ENCODE measurements at regions of chr6 and their contacts with region 1.

Region 1: GRCh38 chr6:14066782-14067406 is 50.7 kb upstream of the CD83 start:
- DNase-seq: no peak
- ATAC-seq: peak; percentile 77
- H3K4me3 Mint-ChIP-seq: no peak overlapping the region
- H3K27ac Mint-ChIP-seq: no peak overlapping the region
- H3K4me1 Mint-ChIP-seq: peaks cover 22% of the 10 kb centered on the region
- H3K27me3 Mint-ChIP-seq: peaks cover 16% of the 10 kb centered on the region

Region 2: DNA sequence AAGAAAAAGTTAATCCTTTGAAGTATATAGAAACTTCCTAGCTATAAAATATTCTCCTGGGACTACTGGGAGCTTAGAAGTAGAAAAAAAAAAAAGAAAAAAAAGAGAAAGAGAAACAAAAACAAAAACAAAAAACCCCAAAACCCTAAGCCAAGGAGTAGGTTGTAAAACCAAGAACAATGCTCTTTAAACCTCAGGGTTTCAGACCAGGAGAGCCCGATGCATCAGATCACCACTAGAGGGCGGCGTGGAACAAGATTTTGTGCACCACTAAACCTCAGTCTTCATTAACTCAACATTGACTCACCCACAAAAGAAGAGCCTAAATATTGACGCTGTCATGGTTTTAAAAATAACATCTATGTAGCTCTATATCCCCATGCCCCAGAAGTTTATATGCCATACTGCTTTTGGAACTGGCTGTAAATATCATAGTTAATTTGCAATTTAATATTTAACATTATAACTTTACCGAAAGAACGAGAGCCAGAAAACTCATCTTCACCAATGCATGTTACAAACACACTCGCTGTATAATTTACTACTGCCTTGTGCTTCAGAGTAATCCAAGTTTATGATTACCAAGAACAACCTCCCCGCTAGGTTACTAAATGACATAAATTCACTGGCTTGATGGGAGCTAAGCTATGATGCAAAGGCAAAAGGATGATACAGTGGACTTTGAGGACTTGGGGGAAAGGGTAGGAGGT is 271.7 kb before region 1 on chr6:
- CTCF ChIA-PET with region 1: interaction called, 23 read pairs
- DNase-seq: peak; percentile 93
- ATAC-seq: peak; percentile 96
- H3K4me3 Mint-ChIP-seq: no peak overlapping the region
- H3K27ac Mint-ChIP-seq: peak overlapping the region; percentile 60
- H3K4me1 Mint-ChIP-seq: peaks cover 33% of the 10 kb centered on the region
- H3K27me3 Mint-ChIP-seq: no peaks in the 10 kb centered on the region

Region 3: GRCh38 chr6:13873285-13874190 is 193.4 kb before region 1 on chr6:
- CTCF ChIA-PET with region 1: interaction called, 32 read pairs
- DNase-seq: peak; percentile 77
- ATAC-seq: peak; percentile 95
- H3K4me3 Mint-ChIP-seq: peak overlapping the region; percentile 67
- H3K27ac Mint-ChIP-seq: peak overlapping the region; percentile 22
- H3K4me1 Mint-ChIP-seq: peaks cover 8% of the 10 kb centered on the region
- H3K27me3 Mint-ChIP-seq: peaks cover 18% of the 10 kb centered on the region

Region 4: DNA sequence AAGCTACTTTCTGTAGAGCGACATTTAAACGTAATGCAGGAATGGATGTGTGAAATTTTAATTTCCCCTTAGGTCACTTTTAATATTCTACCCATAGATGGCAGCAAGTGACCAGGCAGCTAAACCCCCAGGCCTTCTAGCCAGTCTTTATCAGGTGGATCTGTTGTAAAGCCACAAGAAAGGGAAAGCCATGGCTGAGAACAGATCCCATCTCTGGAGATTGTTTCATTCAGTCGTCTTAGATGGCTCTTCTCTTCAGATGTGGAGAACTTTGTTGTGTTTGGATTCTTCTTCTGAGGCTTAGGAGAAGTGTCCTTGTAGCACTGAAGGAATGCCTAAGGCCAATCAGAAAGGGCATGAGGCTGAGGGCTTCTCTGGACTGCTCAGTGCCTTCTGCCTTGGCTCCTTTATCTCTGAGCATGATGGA is 157.9 kb before region 1 on chr6:
- CTCF ChIA-PET with region 1: interaction called, 66 read pairs
- DNase-seq: peak; percentile 52
- ATAC-seq: peak; percentile 60
- H3K4me3 Mint-ChIP-seq: no peak overlapping the region
- H3K27ac Mint-ChIP-seq: no peak overlapping the region
- H3K4me1 Mint-ChIP-seq: no peaks in the 10 kb centered on the region
- H3K27me3 Mint-ChIP-seq: peaks cover 46% of the 10 kb centered on the region

Region 5: DNA sequence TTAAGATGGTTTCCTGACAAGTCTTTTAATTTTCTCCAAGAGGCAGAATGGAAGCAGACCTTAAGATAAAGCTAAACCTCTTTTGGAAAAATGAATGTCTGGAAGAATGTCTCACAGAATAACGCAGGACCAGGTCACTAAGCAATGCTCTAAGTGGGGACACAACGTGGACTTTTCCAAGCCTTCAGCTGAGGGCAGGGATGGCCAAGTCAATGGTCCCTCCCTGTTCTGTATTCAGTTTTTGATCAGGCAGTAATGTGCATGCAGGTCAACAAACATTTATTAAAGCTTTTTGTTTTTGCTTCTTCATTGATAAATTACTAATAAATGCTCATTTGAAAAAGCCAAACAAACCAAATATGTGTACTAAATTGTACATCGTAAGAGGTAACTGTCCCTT is 144.1 kb before region 1 on chr6:
- CTCF ChIA-PET with region 1: interaction called, 10 read pairs
- DNase-seq: no peak
- ATAC-seq: no peak
- H3K4me3 Mint-ChIP-seq: no peak overlapping the region
- H3K27ac Mint-ChIP-seq: no peak overlapping the region
- H3K4me1 Mint-ChIP-seq: peaks cover 13% of the 10 kb centered on the region
- H3K27me3 Mint-ChIP-seq: peaks cover 74% of the 10 kb centered on the region

Region 6: GRCh38 chr6:14037402-14038277 is 29.3 kb before region 1 on chr6:
- CTCF ChIA-PET with region 1: interaction called, 15 read pairs
- DNase-seq: no peak
- ATAC-seq: peak; percentile 47
- H3K4me3 Mint-ChIP-seq: no peak overlapping the region
- H3K27ac Mint-ChIP-seq: no peak overlapping the region
- H3K4me1 Mint-ChIP-seq: peaks cover 15% of the 10 kb centered on the region
- H3K27me3 Mint-ChIP-seq: peaks cover 49% of the 10 kb centered on the region

Region 7: DNA sequence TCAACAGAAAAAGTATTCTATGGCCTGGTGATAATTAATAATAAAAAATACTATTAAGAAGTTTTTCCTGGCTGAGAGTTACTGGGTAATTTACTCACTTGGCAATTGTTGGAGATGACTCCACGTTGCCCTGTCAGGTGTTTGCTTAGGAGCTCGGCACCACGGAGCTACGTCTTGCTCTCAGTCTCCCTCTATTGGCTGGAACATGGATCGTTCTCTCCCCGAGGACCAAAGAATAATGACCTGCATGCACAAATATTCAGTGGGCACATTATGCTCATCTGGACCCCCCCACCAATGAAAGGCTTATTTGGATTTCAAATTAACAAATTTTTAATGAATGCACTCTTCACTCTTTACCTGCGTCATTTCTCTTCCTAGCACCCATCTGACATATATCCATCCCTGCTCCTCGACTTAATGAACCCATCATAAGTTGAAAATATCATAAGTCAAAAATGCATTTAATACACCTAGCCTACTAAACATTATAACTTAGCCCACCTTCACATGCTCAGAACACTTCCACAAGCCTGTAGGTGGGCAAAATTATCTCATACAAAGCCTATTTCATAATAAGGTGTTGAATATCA is 20.3 kb before region 1 on chr6:
- CTCF ChIA-PET with region 1: interaction called, 20 read pairs
- DNase-seq: peak; percentile 61
- ATAC-seq: peak; percentile 72
- H3K4me3 Mint-ChIP-seq: no peak overlapping the region
- H3K27ac Mint-ChIP-seq: no peak overlapping the region
- H3K4me1 Mint-ChIP-seq: no peaks in the 10 kb centered on the region
- H3K27me3 Mint-ChIP-seq: peaks cover 45% of the 10 kb centered on the region

Region 8: GRCh38 chr6:15023448-15023847 is 956.6 kb after region 1 on chr6:
- CTCF ChIA-PET with region 1: no interaction called
- DNase-seq: peak; percentile 86
- ATAC-seq: peak; percentile 94
- H3K4me3 Mint-ChIP-seq: peak overlapping the region; percentile 56
- H3K27ac Mint-ChIP-seq: peak overlapping the region; percentile 92
- H3K4me1 Mint-ChIP-seq: peaks cover 31% of the 10 kb centered on the region
- H3K27me3 Mint-ChIP-seq: no peaks in the 10 kb centered on the region